HEK293 (cell line): ENCODE measurements at regions of chr1 and their contacts with region 1.

Region 1: GRCh38 chr1:111507411-111508201 is 4.2 kb upstream of the ADORA3 start:
- H3K4me3 ChIP-seq: no peak overlapping the region
- H3K27ac ChIP-seq: peak overlapping the region; percentile 11; the same call in 1 of the 2 replicates
- H3K4me1 ChIP-seq: no peaks in the 10 kb centered on the region
- CTCF ChIP-seq: no peak

Region 2: GRCh38 chr1:111399792-111400610 is 107.6 kb before region 1 on chr1:
- CTCF ChIA-PET with region 1: no interaction called
- POLR2A ChIA-PET with region 1: no interaction called
- H3K4me3 ChIP-seq: no peak overlapping the region
- H3K27ac ChIP-seq: no peak overlapping the region
- H3K4me1 ChIP-seq: no peaks in the 10 kb centered on the region
- CTCF ChIP-seq: no peak

Region 3: GRCh38 chr1:111481387-111482221 is 26.0 kb before region 1 on chr1:
- CTCF ChIA-PET with region 1: interaction called, 23 read pairs
- POLR2A ChIA-PET with region 1: no interaction called
- H3K4me3 ChIP-seq: no peak overlapping the region
- H3K27ac ChIP-seq: no peak overlapping the region
- H3K4me1 ChIP-seq: no peaks in the 10 kb centered on the region
- CTCF ChIP-seq: peak; percentile 92

Region 4: DNA sequence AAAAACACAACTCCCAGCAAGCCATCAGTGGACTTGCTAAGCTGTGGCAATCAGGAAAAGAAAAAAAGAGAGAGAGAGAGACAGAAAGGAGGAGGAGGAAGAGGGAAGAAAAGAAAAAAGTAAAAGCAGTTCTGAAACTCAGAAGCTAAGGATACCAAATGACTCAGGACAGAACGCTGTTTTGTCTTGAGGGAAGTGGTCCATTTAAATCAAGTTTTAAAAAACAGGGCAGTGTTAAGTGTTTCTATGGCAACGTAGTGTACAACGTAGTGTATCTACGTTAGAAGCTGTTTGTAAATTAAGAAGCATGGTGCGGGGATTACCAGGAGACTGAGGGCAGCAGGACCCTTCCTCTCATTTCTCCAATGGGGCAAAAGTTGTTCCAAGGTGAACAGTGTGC is 10.0 kb before region 1 on chr1:
- CTCF ChIA-PET with region 1: interaction called, 13 read pairs
- POLR2A ChIA-PET with region 1: interaction called, 6 read pairs
- H3K4me3 ChIP-seq: no peak overlapping the region
- H3K27ac ChIP-seq: no peak overlapping the region
- H3K4me1 ChIP-seq: no peaks in the 10 kb centered on the region
- CTCF ChIP-seq: no peak

Region 5: GRCh38 chr1:111611986-111612385 is 104.4 kb after region 1 on chr1:
- CTCF ChIA-PET with region 1: interaction called, 11 read pairs
- POLR2A ChIA-PET with region 1: no interaction called
- H3K4me3 ChIP-seq: no peak overlapping the region
- H3K27ac ChIP-seq: no peak overlapping the region
- H3K4me1 ChIP-seq: no peaks in the 10 kb centered on the region
- CTCF ChIP-seq: no peak

Region 6: GRCh38 chr1:111720274-111720976 is 212.8 kb after region 1 on chr1:
- CTCF ChIA-PET with region 1: interaction called, 28 read pairs
- POLR2A ChIA-PET with region 1: no interaction called
- H3K4me3 ChIP-seq: no peak overlapping the region
- H3K27ac ChIP-seq: no peak overlapping the region
- H3K4me1 ChIP-seq: no peaks in the 10 kb centered on the region
- CTCF ChIP-seq: no peak

Region 7: DNA sequence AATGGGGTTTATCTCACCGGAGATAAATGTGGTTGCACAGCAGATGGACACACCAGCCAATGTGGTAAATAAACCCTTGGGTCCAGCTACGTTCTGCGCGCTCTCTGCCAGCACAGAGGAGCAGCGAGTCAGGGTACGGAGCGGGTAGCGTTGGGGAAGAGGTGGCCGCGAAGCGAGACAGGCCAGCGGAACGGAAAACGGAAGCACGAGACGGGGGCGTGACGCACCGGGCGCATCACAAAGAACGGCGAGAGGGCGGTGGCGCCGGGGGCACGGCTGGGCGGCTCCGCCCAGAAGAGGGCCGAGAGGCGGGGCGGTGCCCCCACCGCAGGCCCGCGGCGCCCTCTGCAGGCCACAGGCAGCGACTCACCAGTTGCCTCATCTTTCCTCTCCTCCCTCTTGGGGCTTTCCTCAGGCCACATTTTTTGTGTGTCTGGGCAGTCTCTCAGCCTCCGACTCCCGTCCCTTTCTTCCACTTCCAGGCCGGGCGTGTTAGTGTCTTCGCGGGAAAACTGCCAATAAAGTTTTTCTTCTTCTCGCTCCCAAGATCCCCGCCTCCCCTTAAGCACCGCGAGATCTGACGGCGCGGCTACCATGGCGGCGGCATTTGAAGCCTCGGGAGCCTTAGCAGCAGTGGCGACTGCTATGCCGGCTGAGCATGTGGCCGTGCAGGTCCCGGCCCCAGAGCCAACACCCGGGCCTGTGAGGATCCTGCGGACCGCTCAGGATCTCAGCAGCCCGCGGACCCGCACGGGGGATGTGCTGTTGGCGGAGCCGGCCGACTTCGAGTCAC is 247.9 kb after region 1 on chr1 and contains the start of gene DDX20:
- CTCF ChIA-PET with region 1: interaction called, 24 read pairs
- POLR2A ChIA-PET with region 1: interaction called, 5 read pairs
- H3K4me3 ChIP-seq: peak within 1 kb of the TSS; percentile 91
- H3K27ac ChIP-seq: peak within 1 kb of the TSS; percentile 72
- H3K4me1 ChIP-seq: peaks cover 4% of the 10 kb centered on the region; the same call in 1 of the 2 replicates
- CTCF ChIP-seq: peak; percentile 97